ENCODE measurements at regions of chr3 and their contacts with region 1.

Region 1: DNA sequence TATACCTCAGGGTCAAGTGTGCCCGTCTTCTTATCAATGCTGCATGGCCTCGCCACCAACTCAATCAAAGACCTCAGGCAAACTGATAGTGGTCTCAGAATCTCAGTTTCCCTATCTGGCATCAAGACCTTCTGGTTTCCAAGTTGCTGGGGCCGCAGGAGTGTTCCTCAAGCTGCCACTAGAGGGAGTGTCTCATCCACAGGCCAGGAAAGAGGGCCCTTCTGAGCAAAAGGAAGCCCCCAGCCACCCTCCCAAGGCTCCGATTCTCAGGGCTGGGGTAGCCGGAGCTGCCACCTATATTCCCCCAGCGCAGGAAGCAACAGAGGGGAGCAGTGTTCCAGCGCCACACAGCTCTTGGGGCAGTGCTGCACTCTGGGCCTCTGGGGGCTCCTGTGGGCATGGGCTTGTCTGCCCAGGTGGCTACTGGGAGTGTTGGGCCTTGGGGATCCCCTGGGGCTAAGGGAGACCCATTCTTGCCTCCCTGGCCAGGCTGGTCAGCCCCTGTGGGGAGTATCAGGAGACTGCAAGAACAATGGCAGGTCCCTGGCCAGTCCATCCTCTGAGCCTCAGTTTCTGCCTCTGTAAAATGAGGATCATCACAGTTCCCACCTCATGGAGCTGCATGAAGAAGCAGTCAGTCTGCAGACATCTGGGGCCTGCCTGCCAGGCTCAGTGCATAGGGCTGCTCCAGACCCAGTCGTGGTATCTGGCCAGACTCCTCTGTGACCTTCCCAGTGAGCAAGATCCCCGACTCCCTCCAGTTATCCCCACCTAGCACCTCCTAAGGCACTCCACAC is 23.4 kb upstream of the SEC13 start:
- DNase-seq: no peak
- H3K4me3 ChIP-seq: no peak overlapping the region
- H3K27ac ChIP-seq: no peak overlapping the region
- H3K4me1 ChIP-seq: no peaks in the 10 kb centered on the region
- H3K27me3 ChIP-seq: peaks cover 2% of the 10 kb centered on the region
- CTCF ChIP-seq: peak; percentile 87 to 92

Region 2: DNA sequence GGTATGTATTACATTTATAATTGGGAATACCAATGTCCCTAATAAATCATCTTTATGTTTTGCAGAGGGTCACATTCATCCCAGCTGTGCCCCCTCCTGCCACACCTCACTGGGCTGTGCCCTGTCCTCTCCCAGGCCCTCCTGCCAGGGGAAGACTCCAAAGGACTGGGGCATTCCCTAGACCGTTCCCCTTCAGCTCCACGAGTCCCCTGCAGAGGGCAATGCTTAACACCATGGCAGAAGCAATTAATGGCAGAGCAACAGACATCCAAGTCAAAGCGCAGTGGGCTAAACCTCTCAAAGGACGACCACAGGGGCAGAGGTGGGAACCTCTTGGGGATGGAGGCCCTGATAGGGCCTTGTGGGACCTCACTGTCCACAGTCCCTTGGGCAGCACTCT is 47.9 kb after region 1 on chr3:
- CTCF ChIA-PET with region 1: no interaction called
- dilution Hi-C with region 1: no loop called
- in situ Hi-C with region 1: no loop called
- intact Hi-C with region 1: no loop called
- DNase-seq: no peak
- H3K4me3 ChIP-seq: no peak overlapping the region
- H3K27ac ChIP-seq: no peak overlapping the region
- H3K4me1 ChIP-seq: peaks cover 6% of the 10 kb centered on the region
- H3K27me3 ChIP-seq: peaks cover 3% of the 10 kb centered on the region
- CTCF ChIP-seq: peak in 1 of 2 donors; percentile 5

Region 3: DNA sequence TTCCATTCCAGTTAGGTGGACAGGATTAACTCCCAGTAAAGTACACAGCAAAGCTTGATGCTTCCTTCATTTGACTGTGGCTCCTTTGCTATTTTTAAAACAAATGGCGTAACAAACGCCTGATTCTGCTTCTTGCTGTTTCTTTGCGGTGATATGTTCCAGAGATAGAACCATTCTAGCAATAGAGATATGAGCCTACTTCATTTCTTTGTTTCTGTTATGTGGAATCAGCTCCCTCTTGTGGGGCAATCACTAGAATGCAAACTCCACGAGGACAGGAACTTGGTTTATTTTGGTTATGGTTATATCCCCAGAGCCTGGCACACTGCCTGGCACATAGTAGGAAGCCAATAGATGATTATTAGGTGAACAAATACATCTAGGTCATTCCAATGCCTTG is 349.1 kb after region 1 on chr3:
- CTCF ChIA-PET with region 1: no interaction called
- dilution Hi-C with region 1: no loop called
- in situ Hi-C with region 1: no loop called
- intact Hi-C with region 1: loop called (anchors 2 kb)
- DNase-seq: no peak
- H3K4me3 ChIP-seq: no peak overlapping the region
- H3K27ac ChIP-seq: no peak overlapping the region
- H3K4me1 ChIP-seq: no peaks in the 10 kb centered on the region
- H3K27me3 ChIP-seq: peaks cover 7% of the 10 kb centered on the region
- CTCF ChIP-seq: peak in 1 of 2 donors; percentile 41

Region 4: GRCh38 chr3:10703875-10704274 is 359.5 kb after region 1 on chr3:
- CTCF ChIA-PET with region 1: no interaction called
- dilution Hi-C with region 1: no loop called
- in situ Hi-C with region 1: no loop called
- intact Hi-C with region 1: loop called (anchors 1 kb)
- DNase-seq: peak; percentile 33
- H3K4me3 ChIP-seq: no peak overlapping the region
- H3K27ac ChIP-seq: no peak overlapping the region
- H3K4me1 ChIP-seq: no peaks in the 10 kb centered on the region
- H3K27me3 ChIP-seq: peaks cover 20% of the 10 kb centered on the region
- CTCF ChIP-seq: peak; percentile 63 to 69

Region 5: GRCh38 chr3:10738688-10739372 is 394.5 kb after region 1 on chr3:
- CTCF ChIA-PET with region 1: no interaction called
- dilution Hi-C with region 1: loop called (anchors 5 kb)
- in situ Hi-C with region 1: loop called in 1 of 2 experiments (anchors 10 kb)
- intact Hi-C with region 1: loop called (anchors 1 kb)
- DNase-seq: peak; percentile 51
- H3K4me3 ChIP-seq: no peak overlapping the region
- H3K27ac ChIP-seq: no peak overlapping the region
- H3K4me1 ChIP-seq: no peaks in the 10 kb centered on the region
- H3K27me3 ChIP-seq: peaks cover 6% of the 10 kb centered on the region
- CTCF ChIP-seq: peak; percentile 91 to 94